Panc1 (cell line): ENCODE measurements at regions of chr17 and their contacts with region 1.

Region 1: DNA sequence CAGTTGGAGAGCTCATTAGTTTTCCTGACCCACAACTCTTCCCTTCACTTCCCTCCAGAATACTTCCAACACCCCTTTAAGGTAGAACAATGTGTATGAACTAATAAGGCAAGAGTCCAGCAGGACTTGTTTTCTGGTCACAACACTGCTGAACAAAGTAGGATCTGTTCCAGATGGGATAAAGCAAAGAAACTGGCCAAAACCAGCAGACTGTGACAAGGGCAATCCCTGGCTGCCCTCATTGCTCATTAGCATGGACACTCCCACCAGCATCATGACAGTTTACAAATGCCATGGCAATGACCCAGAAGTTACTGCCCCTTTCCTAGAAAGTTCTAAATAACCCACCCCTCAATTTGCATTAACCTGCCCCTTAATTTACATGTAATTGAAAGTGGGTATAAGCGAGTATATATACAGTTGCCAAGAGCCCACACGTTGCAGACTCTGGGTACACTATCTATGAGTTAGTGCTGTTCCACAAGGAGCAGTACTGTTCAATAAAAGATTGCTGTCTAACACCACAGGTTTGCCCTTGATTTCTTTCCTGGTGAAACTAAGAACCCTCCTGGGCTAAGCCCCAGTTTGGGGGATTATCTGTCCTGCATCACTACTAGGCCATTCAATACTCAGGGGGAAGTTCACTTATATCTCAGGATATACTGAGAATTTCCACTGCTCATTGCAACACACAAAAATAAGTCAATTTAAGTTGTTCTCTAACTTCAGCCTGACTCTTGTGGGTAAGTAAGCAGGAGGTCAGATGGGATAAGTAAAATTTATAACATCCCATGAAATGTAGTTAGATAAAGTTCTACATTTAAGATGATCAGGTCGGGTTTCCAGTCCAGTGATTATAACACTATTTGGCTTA is 82.3 kb downstream of the SSH2 start:
- DNase-seq: no peak
- ATAC-seq: no peak; the same call in 1 of the 2 replicates
- H3K4me3 ChIP-seq: no peak overlapping the region
- H3K27ac ChIP-seq: no peak overlapping the region
- H3K4me1 ChIP-seq: no peaks in the 10 kb centered on the region
- H3K27me3 ChIP-seq: no peaks in the 10 kb centered on the region
- CTCF ChIP-seq: no peak

Region 2: DNA sequence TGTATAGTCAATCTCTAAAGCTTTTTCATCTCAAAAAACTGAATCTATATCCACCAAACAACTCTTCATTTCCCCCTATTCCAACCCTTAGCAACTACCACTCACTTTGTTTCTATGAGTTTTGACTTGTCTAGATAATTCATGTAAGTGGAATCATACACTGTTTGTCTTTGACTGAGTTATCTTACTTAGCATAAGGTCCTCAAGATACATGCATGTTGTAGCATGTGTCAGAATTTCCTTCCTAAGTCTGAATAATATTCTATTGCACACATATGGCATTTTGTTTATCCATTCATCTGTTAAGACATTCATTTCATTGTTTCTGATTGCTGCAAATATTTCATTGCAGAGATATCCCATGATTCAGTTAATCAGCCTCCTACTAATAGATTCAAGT is 10.1 kb after region 1 on chr17:
- CTCF ChIA-PET with region 1: no interaction called
- POLR2A ChIA-PET with region 1: no interaction called
- in situ Hi-C with region 1: no loop called
- intact Hi-C with region 1: no loop called
- DNase-seq: no peak
- ATAC-seq: no peak
- H3K4me3 ChIP-seq: no peak overlapping the region
- H3K27ac ChIP-seq: no peak overlapping the region
- H3K4me1 ChIP-seq: no peaks in the 10 kb centered on the region
- H3K27me3 ChIP-seq: no peaks in the 10 kb centered on the region
- CTCF ChIP-seq: no peak

Region 3: DNA sequence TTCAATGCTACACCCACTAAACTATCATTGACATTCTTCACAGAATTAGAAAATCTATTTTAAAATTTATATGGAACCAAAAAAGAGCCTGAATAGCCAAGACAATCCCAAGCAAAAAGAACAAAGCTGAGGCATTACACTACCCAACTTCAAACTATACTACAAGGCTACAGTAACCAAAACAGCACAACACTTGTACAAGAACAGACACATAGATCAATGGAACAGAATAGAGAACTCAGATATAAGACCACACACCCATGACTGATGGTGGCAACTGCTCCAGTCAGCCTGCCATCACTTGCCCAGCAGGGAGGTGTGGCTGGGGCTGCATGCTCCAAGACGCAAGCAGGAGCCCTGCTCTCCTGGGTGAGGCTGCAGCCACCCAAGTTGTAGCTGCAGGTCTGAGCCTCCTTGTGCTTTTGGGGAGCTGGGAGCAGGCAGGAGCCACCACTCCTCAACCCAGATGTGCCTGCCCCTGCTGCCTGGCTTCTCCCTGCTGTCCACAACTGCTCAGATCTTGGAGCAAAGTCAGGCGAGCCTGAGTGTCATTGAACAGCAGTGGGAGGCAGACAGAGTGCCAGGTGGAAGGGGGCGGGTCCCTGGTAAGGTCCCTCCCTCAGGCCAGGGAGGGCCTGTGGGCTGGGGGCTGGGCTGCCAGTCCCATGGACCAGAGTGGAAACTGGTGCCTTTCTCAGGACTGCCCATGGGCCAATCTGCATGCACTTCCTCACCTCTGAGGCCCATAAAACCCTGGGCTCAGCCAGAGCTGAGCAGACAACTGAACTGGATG is 57.5 kb after region 1 on chr17:
- CTCF ChIA-PET with region 1: no interaction called
- POLR2A ChIA-PET with region 1: interaction called, 17 read pairs
- in situ Hi-C with region 1: no loop called
- intact Hi-C with region 1: no loop called
- DNase-seq: no peak
- ATAC-seq: no peak
- H3K4me3 ChIP-seq: no peak overlapping the region
- H3K27ac ChIP-seq: no peak overlapping the region
- H3K4me1 ChIP-seq: no peaks in the 10 kb centered on the region
- H3K27me3 ChIP-seq: no peaks in the 10 kb centered on the region
- CTCF ChIP-seq: no peak